Heart left ventricle (tissue), 16 donors: ENCODE measurements at regions of chr3 and their contacts with region 1.

Region 1: GRCh38 chr3:16048435-16049318 is 125.8 kb upstream of the GALNT15 start:
- DNase-seq: peak in 3 of 5 donors; percentile 35 to 63 (median 57)
- ATAC-seq: peak; percentile 83 to 91 (median 87)
- H3K4me3 ChIP-seq: peak overlapping the region in 3 of 12 donors; percentile 26 to 44 (median 30)
- H3K27ac ChIP-seq: no peak overlapping the region
- H3K4me1 ChIP-seq: peaks cover 0 to 23% (median 12%) of the 10 kb centered on the region in 12 donors
- H3K27me3 ChIP-seq: no peaks in the 10 kb centered on the region
- CTCF ChIP-seq: peak; percentile 72 to 94 (median 82)
- POLR2A ChIP-seq: no peak

Region 2: DNA sequence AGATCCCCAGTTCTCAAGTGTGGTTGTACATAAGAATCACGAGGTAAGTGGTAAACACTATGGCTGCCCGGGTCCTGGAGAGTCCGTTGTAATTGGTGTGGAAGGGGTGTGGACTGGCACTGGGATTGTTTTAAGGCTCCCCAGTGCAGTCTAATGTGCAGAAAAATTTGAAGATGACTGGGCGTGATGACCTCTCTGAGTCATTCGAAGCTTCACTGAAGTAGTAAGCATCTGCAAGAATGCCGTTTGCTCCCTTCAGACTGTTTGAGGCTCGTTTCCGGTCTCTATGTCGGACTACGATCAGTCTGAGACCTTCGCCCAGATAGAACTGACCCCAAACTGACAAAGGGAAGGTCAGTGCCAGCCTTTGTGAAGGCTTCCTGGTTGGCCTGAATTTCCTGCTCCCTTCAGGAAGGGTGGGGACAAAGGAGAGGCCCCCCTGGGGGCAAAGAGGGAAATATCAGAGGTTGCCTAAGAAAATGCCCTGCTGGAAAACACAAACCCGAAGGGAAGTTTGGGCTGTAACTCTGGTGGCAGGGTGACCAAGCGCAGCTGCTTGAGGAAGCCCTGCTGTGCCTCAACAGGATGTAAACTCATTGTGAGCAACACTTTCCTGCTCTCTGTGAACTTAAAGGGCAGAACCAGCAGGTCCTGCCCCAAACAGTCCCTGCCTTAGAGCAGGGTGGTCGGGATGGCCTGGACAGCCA is 412.5 kb before region 1 on chr3:
- intact Hi-C with region 1: no loop called
- DNase-seq: peak in 3 of 5 donors; percentile 28 to 62 (median 38)
- ATAC-seq: peak; percentile 30 to 81 (median 76)
- H3K4me3 ChIP-seq: peak overlapping the region in 3 of 12 donors; percentile 4 to 15 (median 8)
- H3K27ac ChIP-seq: peak overlapping the region in 11 of 12 donors; percentile 3 to 85 (median 60)
- H3K4me1 ChIP-seq: peaks cover 0 to 49% (median 22%) of the 10 kb centered on the region in 12 donors
- H3K27me3 ChIP-seq: no peaks in the 10 kb centered on the region
- CTCF ChIP-seq: no peak
- POLR2A ChIP-seq: no peak

Region 3: DNA sequence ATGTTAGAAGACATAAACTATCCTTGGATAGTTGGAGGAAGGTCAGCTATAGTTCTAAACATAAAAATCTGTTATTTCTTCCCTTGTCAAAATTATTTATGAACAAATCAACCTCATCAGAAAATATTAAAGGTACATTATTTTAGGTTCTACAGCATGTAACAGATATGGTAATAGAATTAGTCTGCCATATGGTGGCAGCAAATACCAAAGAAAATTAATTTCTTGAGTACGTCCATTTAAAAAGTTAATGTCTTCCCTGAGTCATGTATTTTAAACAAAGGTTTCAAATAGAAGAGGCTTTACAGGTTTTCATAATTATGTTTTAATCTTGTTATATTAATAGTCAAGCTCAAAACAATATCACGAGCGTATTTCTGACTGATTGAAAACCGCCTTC is 233.0 kb before region 1 on chr3:
- intact Hi-C with region 1: loop called (anchors 2 to 10 kb)
- DNase-seq: no peak
- ATAC-seq: peak in 2 of 4 donors; percentile 57 to 59
- H3K4me3 ChIP-seq: no peak overlapping the region
- H3K27ac ChIP-seq: no peak overlapping the region
- H3K4me1 ChIP-seq: peaks cover 0 to 16% (median 4%) of the 10 kb centered on the region in 12 donors
- H3K27me3 ChIP-seq: no peaks in the 10 kb centered on the region
- CTCF ChIP-seq: peak; percentile 25 to 70 (median 52)
- POLR2A ChIP-seq: no peak

Region 4: GRCh38 chr3:16112910-16113504 is 64.3 kb after region 1 on chr3:
- intact Hi-C with region 1: loop called in 1 of 10 experiments (anchors 5 kb)
- DNase-seq: no peak
- ATAC-seq: peak in 2 of 4 donors; percentile 65 to 80
- H3K4me3 ChIP-seq: no peak overlapping the region
- H3K27ac ChIP-seq: peak overlapping the region in 8 of 12 donors; percentile 2 to 61 (median 21)
- H3K4me1 ChIP-seq: peaks cover 0 to 13% (median 4%) of the 10 kb centered on the region in 12 donors
- H3K27me3 ChIP-seq: no peaks in the 10 kb centered on the region
- CTCF ChIP-seq: no peak
- POLR2A ChIP-seq: no peak

Region 5: DNA sequence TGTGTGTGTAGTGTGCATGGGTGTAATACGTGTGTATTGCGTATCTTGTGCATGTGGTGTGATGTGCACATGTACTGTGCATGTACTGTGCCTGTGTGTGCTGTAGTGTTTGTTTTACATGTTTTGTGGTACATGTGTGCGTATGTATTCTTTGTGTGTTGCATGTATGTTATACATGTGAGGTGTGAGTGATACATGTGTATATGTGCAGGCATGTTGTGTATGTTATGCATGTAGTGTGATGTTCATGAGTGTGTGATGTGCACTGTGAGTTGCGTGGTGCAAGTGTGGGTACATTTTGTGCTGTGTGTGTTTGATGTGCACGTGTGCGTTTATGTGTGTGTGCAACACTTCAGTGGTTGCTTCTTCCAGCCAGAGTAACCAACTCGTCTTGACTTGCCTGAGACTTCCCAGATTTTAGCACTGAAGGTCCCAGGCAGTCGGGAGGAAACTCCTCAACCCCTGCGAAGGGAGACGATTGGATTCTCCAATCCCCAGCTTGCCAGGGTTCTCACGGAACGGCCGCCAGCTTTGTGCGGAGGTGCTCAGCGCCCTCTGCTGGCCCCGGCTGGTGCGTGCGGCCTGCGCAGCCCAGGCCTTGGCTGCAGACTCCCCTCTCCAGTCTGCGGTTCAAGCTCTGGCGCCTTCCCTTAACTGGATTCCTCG is 129.4 kb after region 1 on chr3:
- intact Hi-C with region 1: loop called (anchors 1 to 2 kb)
- DNase-seq: peak; percentile 78 to 92 (median 84)
- ATAC-seq: peak; percentile 45 to 78 (median 76)
- H3K4me3 ChIP-seq: peak overlapping the region in 10 of 12 donors; percentile 3 to 56 (median 35)
- H3K27ac ChIP-seq: peak overlapping the region in 2 of 12 donors; percentile 46 to 50
- H3K4me1 ChIP-seq: peaks cover 0 to 49% (median 29%) of the 10 kb centered on the region in 12 donors
- H3K27me3 ChIP-seq: no peaks in the 10 kb centered on the region
- CTCF ChIP-seq: peak; percentile 94 to 99 (median 96)
- POLR2A ChIP-seq: peak in 1 of 2 donors; percentile 50

Region 6: DNA sequence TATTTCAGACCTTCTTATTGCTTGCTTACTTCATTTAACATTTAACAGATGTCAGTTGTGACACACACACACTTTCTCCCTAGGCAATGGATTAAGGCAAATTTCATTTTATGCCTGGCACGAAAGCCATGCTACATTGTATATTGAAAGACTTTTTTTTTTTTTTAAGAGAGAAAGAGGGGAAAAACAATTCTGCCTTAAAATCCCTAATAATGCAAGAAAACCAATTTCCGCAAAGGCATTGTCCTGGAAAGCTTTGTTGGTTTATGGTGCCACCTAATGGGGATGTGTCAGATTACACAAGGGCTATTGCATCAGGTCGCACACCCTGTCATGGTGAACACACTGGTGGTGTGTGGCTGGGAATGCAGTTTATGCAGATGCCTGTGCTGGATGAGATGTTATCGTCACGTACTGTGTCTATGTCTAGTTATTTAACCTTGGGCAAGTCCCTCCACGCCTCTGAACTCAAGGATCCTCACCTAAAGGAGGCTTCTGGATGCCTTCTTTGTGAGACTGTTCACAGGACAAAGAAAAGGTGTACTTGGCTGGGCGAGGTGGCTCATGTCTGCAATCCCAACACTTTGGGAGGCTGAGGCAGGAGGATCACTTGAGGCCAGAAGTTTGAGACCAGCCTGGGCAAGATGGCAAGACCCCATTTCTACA is 502.1 kb after region 1 on chr3:
- intact Hi-C with region 1: loop called in 6 of 10 experiments (anchors 5 to 10 kb)
- DNase-seq: peak in 3 of 5 donors; percentile 53 to 68 (median 58)
- ATAC-seq: peak; percentile 66 to 88 (median 79)
- H3K4me3 ChIP-seq: peak overlapping the region in 7 of 12 donors; percentile 9 to 34 (median 26)
- H3K27ac ChIP-seq: peak overlapping the region in 6 of 12 donors; percentile 4 to 49 (median 36)
- H3K4me1 ChIP-seq: peaks cover 0 to 26% (median 5%) of the 10 kb centered on the region in 12 donors
- H3K27me3 ChIP-seq: no peaks in the 10 kb centered on the region
- CTCF ChIP-seq: peak; percentile 85 to 93 (median 90)
- POLR2A ChIP-seq: no peak